Posterior vena cava (tissue), 2 donors: ENCODE measurements at regions of chr12 and their contacts with region 1.

Region 1: GRCh38 chr12:94532490-94533422 is 73.1 kb upstream of the CEP83 start:
- DNase-seq: peak; percentile 90

Region 2: DNA sequence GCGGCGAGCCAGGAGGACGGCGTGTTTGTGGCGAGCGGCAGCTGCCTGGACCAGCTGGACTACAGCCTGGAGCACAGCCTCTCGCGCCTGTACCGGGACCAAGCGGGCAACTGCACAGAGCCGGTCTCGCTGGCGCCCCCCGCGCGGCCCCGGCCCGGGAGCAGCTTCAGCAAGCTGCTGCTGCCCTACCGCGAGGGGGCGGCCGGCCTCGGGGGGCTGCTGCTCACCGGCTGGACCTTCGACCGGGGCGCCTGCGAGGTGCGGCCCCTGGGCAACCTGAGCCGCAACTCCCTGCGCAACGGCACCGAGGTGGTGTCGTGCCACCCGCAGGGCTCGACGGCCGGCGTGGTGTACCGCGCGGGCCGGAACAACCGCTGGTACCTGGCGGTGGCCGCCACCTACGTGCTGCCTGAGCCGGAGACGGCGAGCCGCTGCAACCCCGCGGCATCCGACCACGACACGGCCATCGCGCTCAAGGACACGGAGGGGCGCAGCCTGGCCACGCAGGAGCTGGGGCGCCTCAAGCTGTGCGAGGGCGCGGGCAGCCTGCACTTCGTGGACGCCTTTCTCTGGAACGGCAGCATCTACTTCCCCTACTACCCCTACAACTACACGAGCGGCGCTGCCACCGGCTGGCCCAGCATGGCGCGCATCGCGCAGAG is 383.5 kb before region 1 on chr12:
- intact Hi-C with region 1: loop called (anchors 5 kb)
- DNase-seq: peak; percentile 86

Region 3: GRCh38 chr12:94545935-94546771 is 13.4 kb after region 1 on chr12:
- intact Hi-C with region 1: no loop called
- DNase-seq: peak; percentile 69

Region 4: DNA sequence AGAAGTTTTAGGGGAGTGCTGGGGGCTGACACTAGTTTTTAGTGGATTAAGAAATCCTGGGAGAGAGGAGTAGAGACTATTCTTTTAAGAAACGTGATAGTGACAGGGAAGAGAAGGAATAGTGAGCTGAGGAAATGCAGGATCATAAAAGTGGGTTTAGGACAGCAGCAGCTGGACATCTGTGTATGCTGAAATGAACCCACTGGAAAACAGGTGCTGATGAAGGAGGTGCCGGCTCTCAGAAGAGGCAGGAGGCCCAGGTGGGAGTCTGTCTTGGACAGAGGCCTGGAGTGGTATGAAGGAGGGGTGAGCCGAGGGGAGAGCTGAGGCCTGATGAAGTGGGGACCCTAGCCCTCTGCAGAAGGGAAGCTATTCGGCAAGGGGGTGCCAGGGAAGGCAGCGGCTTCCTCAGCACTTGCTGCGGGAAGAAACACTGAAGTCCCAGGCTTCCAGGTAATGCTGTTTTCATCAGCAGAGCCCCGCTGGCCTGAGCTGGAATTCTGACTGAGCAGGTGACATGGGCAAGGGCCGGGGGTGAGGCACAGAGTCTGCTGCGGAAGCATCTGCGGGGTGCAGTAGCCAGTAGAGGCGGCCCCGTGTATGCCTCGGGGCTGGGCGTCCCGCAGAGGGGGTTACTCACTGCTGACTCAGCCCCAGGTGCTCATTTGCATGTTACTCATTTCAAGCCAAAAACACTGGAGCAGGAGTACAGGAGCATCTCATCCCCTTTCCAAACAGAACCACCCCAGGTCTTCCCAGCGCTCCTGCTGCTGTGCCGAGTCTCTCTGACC is 27.9 kb after region 1 on chr12:
- intact Hi-C with region 1: no loop called
- DNase-seq: peak; percentile 72

Region 5: GRCh38 chr12:94699801-94700200 is 167.0 kb after region 1 on chr12:
- intact Hi-C with region 1: no loop called
- DNase-seq: no peak